Heart right ventricle (tissue), 16 donors: ENCODE measurements at regions of chr9 and their contacts with region 1.

Region 1: DNA sequence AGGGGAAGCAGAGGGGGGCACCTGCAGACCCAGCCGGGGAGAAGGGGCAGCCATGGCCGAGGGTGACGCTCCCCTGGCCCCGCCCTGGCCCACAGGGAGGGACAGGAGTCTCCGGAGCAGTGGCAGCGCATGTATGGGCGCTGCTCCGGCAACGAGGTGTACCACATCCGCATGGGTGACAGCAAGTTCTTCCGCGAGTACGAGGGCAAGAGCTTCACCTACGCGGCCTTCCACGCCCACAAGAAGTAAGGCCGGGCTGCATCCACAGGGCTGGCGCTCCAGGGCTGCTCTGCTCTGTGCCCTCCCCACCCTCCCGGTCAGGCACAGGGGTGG is 68.2 kb downstream of the KCNT1 start:
- DNase-seq: no peak
- ATAC-seq: no peak
- H3K4me3 ChIP-seq: no peak overlapping the region
- H3K27ac ChIP-seq: no peak overlapping the region
- H3K4me1 ChIP-seq: no peaks in the 10 kb centered on the region
- H3K27me3 ChIP-seq: peaks cover 0 to 11% (median 0%) of the 10 kb centered on the region in 7 donors
- CTCF ChIP-seq: no peak

Region 2: GRCh38 chr9:135615666-135616618 is 154.2 kb before region 1 on chr9:
- intact Hi-C with region 1: loop called in 1 of 10 experiments (anchors 10 kb)
- DNase-seq: no peak
- ATAC-seq: no peak
- H3K4me3 ChIP-seq: no peak overlapping the region
- H3K27ac ChIP-seq: no peak overlapping the region
- H3K4me1 ChIP-seq: no peaks in the 10 kb centered on the region
- H3K27me3 ChIP-seq: peaks cover 0 to 76% (median 50%) of the 10 kb centered on the region in 7 donors
- CTCF ChIP-seq: peak in 1 of 9 donors; percentile 9

Region 3: GRCh38 chr9:135821733-135822373 is 51.7 kb after region 1 on chr9:
- intact Hi-C with region 1: no loop called
- DNase-seq: no peak
- ATAC-seq: no peak
- H3K4me3 ChIP-seq: no peak overlapping the region
- H3K27ac ChIP-seq: no peak overlapping the region
- H3K4me1 ChIP-seq: no peaks in the 10 kb centered on the region
- H3K27me3 ChIP-seq: no peaks in the 10 kb centered on the region
- CTCF ChIP-seq: no peak

Region 4: DNA sequence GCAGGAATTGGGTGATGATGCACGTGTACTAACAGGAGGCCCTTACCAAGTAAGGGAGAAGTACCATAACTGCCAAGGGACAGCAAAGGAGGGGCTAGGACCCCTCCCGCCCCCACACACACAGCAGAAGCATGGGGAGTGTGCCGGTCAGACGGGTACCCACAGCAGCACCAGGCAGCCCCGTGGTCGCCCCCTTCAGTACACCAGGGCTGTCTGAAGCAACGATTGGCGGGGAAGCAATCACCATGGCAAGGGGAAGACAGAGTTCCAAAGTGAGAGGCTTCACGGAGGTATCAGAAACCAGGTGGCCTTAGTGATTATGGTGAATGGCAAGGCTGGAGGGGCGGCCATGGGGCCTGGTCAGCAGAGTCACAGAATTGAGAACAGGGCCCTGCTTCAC is 65.0 kb after region 1 on chr9:
- intact Hi-C with region 1: no loop called
- DNase-seq: no peak
- ATAC-seq: no peak
- H3K4me3 ChIP-seq: no peak overlapping the region
- H3K27ac ChIP-seq: no peak overlapping the region
- H3K4me1 ChIP-seq: no peaks in the 10 kb centered on the region
- H3K27me3 ChIP-seq: no peaks in the 10 kb centered on the region
- CTCF ChIP-seq: no peak